ENCODE measurements at regions of chr1 and their contacts with region 1.

Region 1: GRCh38 chr1:206784471-206784903 is 12.2 kb upstream of the IL10 start:
- DNase-seq: peak; percentile 88
- H3K4me3 Mint-ChIP-seq: peak overlapping the region; percentile 61
- H3K27ac Mint-ChIP-seq: peak overlapping the region; percentile 83
- H3K4me1 Mint-ChIP-seq: peaks cover 67% of the 10 kb centered on the region
- H3K27me3 Mint-ChIP-seq: peaks cover 5% of the 10 kb centered on the region

Region 2: DNA sequence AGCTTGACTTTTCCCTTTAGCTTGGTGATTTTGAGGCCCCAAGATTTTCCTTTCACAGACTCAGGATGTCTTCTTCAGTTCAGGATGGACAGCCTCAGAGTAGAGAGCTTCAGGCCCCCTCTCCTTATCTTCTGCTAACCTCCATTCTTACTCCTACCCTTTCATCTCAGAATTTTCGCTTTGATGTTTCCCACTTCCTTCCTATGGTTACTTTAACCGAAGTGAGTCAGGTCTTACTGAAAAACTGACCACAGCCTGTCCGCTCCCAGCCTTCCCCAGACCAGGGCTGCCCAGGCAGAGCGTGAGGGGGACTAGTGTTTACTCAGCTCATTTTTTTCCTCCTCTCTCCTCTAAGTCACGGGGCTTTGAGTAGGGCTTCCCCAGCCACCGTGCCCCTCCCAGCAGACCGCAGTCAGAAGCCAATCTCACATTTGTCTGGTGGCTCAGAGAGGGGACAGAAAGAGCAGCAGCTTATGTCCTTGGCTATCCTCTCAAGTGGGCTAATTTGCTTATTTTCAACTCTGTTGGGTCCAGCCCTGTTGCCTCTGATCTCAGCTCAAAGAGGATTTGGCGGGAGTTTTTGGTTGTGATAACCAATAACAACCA is 18.1 kb before region 1 on chr1:
- intact Hi-C with region 1: loop called (anchors 1 kb)
- DNase-seq: peak; percentile 69
- H3K4me3 Mint-ChIP-seq: no peak overlapping the region
- H3K27ac Mint-ChIP-seq: peak overlapping the region; percentile 69
- H3K4me1 Mint-ChIP-seq: peaks cover 65% of the 10 kb centered on the region
- H3K27me3 Mint-ChIP-seq: peaks cover 6% of the 10 kb centered on the region

Region 3: GRCh38 chr1:207004981-207005830 is 220.7 kb after region 1 on chr1:
- intact Hi-C with region 1: no loop called
- DNase-seq: no peak
- H3K4me3 Mint-ChIP-seq: no peak overlapping the region
- H3K27ac Mint-ChIP-seq: no peak overlapping the region
- H3K4me1 Mint-ChIP-seq: peaks cover 2% of the 10 kb centered on the region
- H3K27me3 Mint-ChIP-seq: peaks cover 24% of the 10 kb centered on the region